Activated CD4-positive, alpha-beta T cell treated with anti-CD3 and anti-CD28 coated beads, Interleukin-2, amount 10 ng/mL, durations not matched to agents 24 days and 14 days (primary cell): ENCODE measurements at regions of chr10 and their contacts with region 1.

Region 1: DNA sequence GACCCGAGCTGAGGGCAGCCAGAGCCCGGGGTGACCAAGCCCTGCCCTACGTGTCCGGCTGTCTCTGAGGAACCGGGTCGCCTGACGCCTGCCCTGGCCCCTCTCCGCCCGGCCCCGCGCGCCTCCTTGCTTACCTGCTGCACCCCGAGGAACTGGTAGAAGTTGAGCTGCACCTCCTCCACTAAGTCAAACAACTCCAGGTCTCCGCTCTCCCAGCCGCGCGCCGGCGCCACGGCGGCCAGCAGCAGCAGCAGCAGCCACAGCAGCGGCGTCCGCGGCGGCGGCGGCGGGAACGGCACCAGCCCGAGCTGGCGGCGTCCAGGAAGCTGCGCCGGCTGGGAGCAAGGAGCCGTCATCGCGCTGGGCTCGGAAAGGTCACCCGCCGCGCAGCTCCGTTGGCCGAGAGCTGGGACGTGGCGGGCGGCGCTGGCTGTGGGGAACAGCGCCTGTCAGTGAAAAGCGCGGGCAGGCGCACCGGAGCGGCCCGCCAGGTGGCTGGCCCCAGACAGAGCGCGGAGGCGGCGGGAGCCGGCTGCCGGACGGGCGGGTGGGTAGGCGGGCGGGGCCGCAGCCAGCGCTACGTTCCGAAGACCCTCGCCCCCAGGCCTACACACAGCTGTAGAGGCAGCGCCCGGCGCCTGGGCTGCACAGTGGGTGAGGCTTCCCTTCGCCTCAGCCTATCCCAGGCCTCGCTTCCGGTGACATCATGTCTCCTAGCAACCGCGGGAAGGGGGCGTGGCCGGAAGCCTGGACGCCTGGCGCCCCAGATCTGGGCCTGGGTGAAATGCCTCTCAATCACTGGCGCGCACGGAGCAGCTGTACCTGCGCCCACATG is at the start of gene DNAJC1:
- DNase-seq: peak; percentile 100
- H3K4me3 Mint-ChIP-seq: peak within 1 kb of the TSS; percentile 93
- H3K27ac Mint-ChIP-seq: peak within 1 kb of the TSS; percentile 96
- H3K4me1 Mint-ChIP-seq: peaks cover 26% of the 10 kb centered on the region
- H3K27me3 Mint-ChIP-seq: peaks cover 18% of the 10 kb centered on the region
- total RNA-seq, gene DNAJC1: 22.1 and 22.4 TPM in 2 replicates

Region 2: GRCh38 chr10:21516242-21517131 is 486.8 kb before region 1 on chr10:
- intact Hi-C with region 1: loop called (anchors 5 kb)
- DNase-seq: peak; percentile 86
- H3K4me3 Mint-ChIP-seq: peak overlapping the region; percentile 87
- H3K27ac Mint-ChIP-seq: no peak overlapping the region
- H3K4me1 Mint-ChIP-seq: peaks cover 40% of the 10 kb centered on the region
- H3K27me3 Mint-ChIP-seq: peaks cover 78% of the 10 kb centered on the region

Region 3: DNA sequence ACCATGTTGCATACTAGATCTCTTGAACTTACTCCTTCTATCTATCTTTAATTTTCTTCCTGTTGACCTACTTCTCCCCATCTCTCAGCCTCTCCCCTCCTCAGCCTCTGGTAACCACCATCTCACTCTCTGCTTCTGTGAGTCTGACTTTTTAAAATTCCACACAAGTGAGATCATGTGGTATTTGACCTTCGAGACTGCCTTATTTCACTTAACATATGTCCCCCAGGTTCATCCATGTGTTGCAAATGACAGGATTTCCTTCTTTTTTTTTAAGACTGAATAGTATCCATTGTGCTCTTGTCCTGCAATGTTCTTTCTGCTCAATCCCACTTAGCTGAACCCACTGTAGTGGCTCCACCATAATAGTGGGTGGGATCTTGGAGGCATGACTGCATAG is 51.7 kb after region 1 on chr10:
- intact Hi-C with region 1: no loop called
- DNase-seq: no peak
- H3K4me3 Mint-ChIP-seq: no peak overlapping the region
- H3K27ac Mint-ChIP-seq: no peak overlapping the region
- H3K4me1 Mint-ChIP-seq: no peaks in the 10 kb centered on the region
- H3K27me3 Mint-ChIP-seq: peaks cover 2% of the 10 kb centered on the region

Region 4: GRCh38 chr10:22228943-22229801 is 225.9 kb after region 1 on chr10:
- intact Hi-C with region 1: loop called (anchors 1 kb)
- DNase-seq: peak; percentile 96
- H3K4me3 Mint-ChIP-seq: peak overlapping the region; percentile 84
- H3K27ac Mint-ChIP-seq: peak overlapping the region; percentile 92
- H3K4me1 Mint-ChIP-seq: peaks cover 21% of the 10 kb centered on the region
- H3K27me3 Mint-ChIP-seq: peaks cover 14% of the 10 kb centered on the region

Region 5: DNA sequence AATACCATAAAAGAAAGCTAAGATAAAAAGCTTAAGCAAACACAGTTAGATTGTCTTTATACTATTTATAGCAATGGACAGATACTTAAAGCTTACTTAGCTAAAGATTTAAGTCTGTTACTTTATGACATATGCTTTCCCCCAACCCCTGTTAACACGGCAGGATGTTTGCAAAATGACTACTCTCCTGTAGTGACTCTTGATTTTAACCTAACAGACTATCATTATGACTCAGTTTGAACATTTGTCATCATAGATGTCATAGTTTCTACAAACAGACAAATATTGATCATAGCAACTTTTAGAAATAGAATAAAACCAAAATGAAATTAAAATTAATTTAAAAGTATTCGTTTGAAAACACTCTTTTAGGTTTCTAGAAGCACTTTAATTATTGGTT is 305.1 kb after region 1 on chr10:
- intact Hi-C with region 1: loop called (anchors 2 kb)
- DNase-seq: peak; percentile 79
- H3K4me3 Mint-ChIP-seq: no peak overlapping the region
- H3K27ac Mint-ChIP-seq: no peak overlapping the region
- H3K4me1 Mint-ChIP-seq: peaks cover 10% of the 10 kb centered on the region
- H3K27me3 Mint-ChIP-seq: peaks cover 2% of the 10 kb centered on the region

Region 6: DNA sequence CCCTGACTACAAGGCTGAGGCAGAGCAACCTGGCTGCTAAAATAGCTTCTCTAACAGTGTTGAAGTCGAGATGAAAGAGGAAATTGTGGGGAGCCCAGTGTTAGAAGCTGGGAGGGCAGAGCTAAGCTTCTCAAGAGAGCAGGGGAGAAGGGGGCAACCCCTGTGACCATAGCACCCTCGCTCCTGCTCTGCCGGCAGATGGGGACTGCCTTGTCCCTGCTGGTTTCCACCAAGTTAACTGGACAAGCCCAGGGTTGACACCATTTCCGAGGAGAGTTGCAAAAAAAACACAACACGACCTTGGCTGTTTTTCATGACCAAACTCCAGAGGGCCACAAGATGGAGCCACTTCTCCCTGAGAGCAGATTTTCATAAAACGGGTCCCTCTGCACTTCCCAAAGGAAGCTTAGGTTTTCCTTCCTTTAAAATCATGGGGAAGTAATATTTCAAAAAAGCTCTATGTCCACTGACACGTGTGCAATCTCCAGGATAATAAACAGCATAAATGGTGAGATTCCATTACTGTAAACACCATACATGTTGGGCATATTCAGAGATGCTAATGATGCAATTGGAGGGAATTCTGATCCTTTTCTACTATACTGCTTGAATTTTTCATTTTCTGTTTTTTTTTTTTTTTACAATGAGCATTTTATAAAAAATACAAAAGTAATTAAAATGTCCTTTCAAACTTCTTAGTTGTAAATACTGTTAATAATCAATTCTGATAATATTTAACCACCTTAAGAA is 570.7 kb after region 1 on chr10:
- intact Hi-C with region 1: loop called (anchors 1 kb)
- DNase-seq: no peak
- H3K4me3 Mint-ChIP-seq: no peak overlapping the region
- H3K27ac Mint-ChIP-seq: no peak overlapping the region
- H3K4me1 Mint-ChIP-seq: peaks cover 36% of the 10 kb centered on the region
- H3K27me3 Mint-ChIP-seq: no peaks in the 10 kb centered on the region